Sigmoid colon (tissue), 7 donors: ENCODE measurements at regions of chr6 and their contacts with region 1.

Region 1: DNA sequence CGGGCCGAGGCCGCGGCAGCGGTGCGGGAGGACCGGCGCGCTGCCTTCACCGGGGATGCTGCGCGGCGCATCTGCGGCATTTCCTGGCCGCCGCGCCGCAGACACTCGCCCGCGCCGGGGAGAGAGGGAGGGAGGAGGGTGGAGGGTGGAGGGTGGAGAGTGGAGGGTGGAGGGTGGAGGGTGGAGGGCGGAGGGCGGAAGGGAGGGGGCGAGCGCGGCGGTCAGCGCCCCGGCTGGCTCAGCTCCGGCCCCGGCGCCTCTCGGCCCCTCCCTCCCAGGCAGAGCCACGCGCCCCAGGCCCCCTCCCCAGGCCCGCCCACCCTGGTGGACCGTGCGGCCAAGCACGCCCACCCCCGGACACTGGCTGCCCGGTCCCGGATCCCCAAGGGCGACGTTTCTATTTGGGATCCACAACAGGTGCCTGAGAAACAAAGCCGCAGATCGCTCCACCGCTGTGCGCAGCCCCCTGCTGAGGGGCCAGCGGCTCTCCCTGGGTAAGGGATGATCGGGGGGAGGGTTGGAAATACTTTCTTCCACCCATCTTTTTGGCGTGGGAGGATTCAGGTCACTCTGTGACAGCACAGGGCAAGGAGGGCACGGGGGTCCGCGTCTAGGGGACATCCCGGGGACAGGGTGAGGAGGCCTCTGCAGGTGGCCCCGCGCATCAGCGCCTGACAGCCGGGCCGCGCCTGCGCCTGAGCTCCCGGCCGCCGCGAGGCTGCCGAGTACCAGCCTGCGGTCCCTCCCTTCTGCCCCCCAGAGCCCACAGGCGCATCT is 111.1 kb upstream of the BEND6 start:
- DNase-seq: peak; percentile 90
- H3K4me3 ChIP-seq: peak overlapping the region; percentile 74 to 87 (median 84)
- H3K27ac ChIP-seq: peak overlapping the region; percentile 93 to 96 (median 94)
- H3K4me1 ChIP-seq: peaks cover 0 to 43% (median 17%) of the 10 kb centered on the region in 4 donors
- H3K27me3 ChIP-seq: no peaks in the 10 kb centered on the region
- CTCF ChIP-seq: peak; percentile 36 to 73 (median 57)
- EP300 ChIP-seq: no peak
- POLR2A ChIP-seq: peak; percentile 38 to 56

Region 2: GRCh38 chr6:56766806-56767190 is 77.0 kb before region 1 on chr6:
- intact Hi-C with region 1: loop called (anchors 2 kb)
- DNase-seq: no peak
- H3K4me3 ChIP-seq: no peak overlapping the region
- H3K27ac ChIP-seq: peak overlapping the region in 3 of 4 donors; percentile 5 to 69 (median 67)
- H3K4me1 ChIP-seq: peaks cover 0 to 76% (median 68%) of the 10 kb centered on the region in 4 donors
- H3K27me3 ChIP-seq: no peaks in the 10 kb centered on the region
- CTCF ChIP-seq: no peak
- EP300 ChIP-seq: no peak
- POLR2A ChIP-seq: no peak

Region 3: DNA sequence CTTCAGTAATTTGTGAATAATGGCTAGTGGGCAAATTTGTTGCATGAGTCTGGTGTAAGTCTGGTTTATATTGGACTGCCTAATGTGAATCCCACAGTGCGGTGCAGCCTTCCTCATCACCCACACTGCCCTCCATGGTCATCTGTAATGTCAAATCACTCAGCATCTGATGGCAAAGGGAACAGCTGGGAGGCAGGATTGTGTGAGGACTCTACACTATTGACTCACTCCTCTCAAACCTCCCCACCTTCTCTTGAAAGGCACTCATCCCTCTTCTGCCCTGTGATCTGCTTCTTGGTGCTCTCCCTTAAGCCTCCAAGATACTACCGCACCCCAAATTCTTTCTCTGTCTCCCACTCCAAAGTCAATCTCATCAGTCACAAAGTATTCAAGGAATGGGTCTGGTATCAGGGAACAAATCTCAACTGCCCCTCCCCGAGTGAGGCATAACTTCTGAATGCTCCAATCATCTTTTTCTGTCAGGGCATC is 34.8 kb before region 1 on chr6:
- intact Hi-C with region 1: no loop called
- DNase-seq: no peak
- H3K4me3 ChIP-seq: no peak overlapping the region
- H3K27ac ChIP-seq: no peak overlapping the region
- H3K4me1 ChIP-seq: peaks cover 0 to 50% (median 38%) of the 10 kb centered on the region in 4 donors
- H3K27me3 ChIP-seq: no peaks in the 10 kb centered on the region
- CTCF ChIP-seq: no peak
- EP300 ChIP-seq: no peak
- POLR2A ChIP-seq: no peak